CD4-positive, alpha-beta T cell (primary cell): ENCODE measurements at regions of chrX and their contacts with region 1.

Region 1: GRCh38 chrX:79270401-79270800 is 96.7 kb downstream of the ITM2A start:
- DNase-seq: peak; percentile 55 to 88 (median 72)
- ATAC-seq: peak; percentile 95
- H3K4me3 ChIP-seq: no peak overlapping the region
- H3K4me3 Mint-ChIP-seq: peak overlapping the region; percentile 53
- H3K27ac ChIP-seq: peak overlapping the region; percentile 3 to 29
- H3K27ac Mint-ChIP-seq: peak overlapping the region; percentile 87
- H3K4me1 ChIP-seq: peaks cover 3% of the 10 kb centered on the region
- H3K4me1 Mint-ChIP-seq: peaks cover 59% of the 10 kb centered on the region
- H3K27me3 ChIP-seq: no peaks in the 10 kb centered on the region
- H3K27me3 Mint-ChIP-seq: no peaks in the 10 kb centered on the region
- CTCF ChIP-seq: peak; percentile 75

Region 2: GRCh38 chrX:78555401-78555980 is 714.9 kb before region 1 on chrX:
- CTCF ChIA-PET with region 1: interaction called, 3 read pairs
- POLR2A ChIA-PET with region 1: no interaction called
- intact Hi-C with region 1: loop called (anchors 1 to 2 kb)
- DNase-seq: peak in 3 of 14 experiments; percentile 41 to 48 (median 45)
- ATAC-seq: peak; percentile 26
- H3K4me3 ChIP-seq: no peak overlapping the region
- H3K4me3 Mint-ChIP-seq: no peak overlapping the region
- H3K27ac ChIP-seq: no peak overlapping the region
- H3K27ac Mint-ChIP-seq: no peak overlapping the region
- H3K4me1 ChIP-seq: no peaks in the 10 kb centered on the region
- H3K4me1 Mint-ChIP-seq: peaks cover 9% of the 10 kb centered on the region
- H3K27me3 ChIP-seq: no peaks in the 10 kb centered on the region
- H3K27me3 Mint-ChIP-seq: no peaks in the 10 kb centered on the region
- CTCF ChIP-seq: peak; percentile 47

Region 3: GRCh38 chrX:78957768-78958130 is 312.7 kb before region 1 on chrX:
- CTCF ChIA-PET with region 1: interaction called, 3 read pairs
- POLR2A ChIA-PET with region 1: no interaction called
- intact Hi-C with region 1: loop called in 1 of 2 experiments (anchors 10 kb)
- DNase-seq: no peak
- ATAC-seq: no peak
- H3K4me3 ChIP-seq: no peak overlapping the region
- H3K4me3 Mint-ChIP-seq: peak overlapping the region; percentile 45
- H3K27ac ChIP-seq: peak overlapping the region; percentile 13 to 28
- H3K27ac Mint-ChIP-seq: peak overlapping the region; percentile 63
- H3K4me1 ChIP-seq: peaks cover 28% of the 10 kb centered on the region
- H3K4me1 Mint-ChIP-seq: peaks cover 79% of the 10 kb centered on the region
- H3K27me3 ChIP-seq: no peaks in the 10 kb centered on the region
- H3K27me3 Mint-ChIP-seq: no peaks in the 10 kb centered on the region
- CTCF ChIP-seq: no peak

Region 4: DNA sequence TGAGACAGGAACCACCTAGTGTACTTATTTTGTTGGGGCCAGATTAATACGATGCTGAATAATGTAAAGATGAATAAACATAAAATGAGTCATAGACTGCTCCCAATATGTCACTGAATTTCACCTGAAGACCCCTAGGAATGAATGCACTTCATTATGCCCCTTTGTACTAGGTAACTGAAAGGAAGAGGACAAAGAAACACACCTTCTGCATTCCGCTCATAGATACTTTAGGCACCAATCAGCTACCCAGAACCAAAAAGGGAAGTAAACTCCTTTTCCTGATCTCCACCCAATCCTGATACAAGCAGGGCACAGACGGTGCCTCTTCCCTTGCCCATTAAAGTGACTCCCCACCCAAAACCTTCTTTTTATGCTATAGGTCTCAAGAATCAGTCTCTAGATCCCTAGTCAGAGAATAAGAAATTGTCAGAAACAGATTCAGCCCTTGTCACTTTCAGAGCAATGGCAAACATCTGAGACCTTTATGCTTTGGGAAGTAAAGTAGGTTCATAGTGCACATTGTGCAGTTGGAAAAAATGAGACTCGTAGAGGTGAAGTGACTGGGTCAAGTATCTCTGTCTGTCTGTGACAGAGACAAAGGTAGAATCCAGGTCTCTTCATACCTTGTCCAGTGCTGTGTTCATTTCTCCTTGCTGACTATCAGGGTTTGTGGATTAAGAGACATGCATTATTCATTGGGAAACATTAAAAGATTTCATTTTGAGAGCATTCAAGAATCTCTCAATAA is 123.6 kb before region 1 on chrX:
- CTCF ChIA-PET with region 1: interaction called, 5 read pairs
- POLR2A ChIA-PET with region 1: interaction called, 9 read pairs
- intact Hi-C with region 1: loop called in 1 of 2 experiments (anchors 5 kb)
- DNase-seq: peak in 4 of 14 experiments; percentile 32 to 80 (median 44)
- ATAC-seq: peak; percentile 22
- H3K4me3 ChIP-seq: peak overlapping the region; percentile 80
- H3K4me3 Mint-ChIP-seq: peak overlapping the region; percentile 95
- H3K27ac ChIP-seq: peak overlapping the region; percentile 73 to 77
- H3K27ac Mint-ChIP-seq: peak overlapping the region; percentile 95
- H3K4me1 ChIP-seq: peaks cover 20% of the 10 kb centered on the region
- H3K4me1 Mint-ChIP-seq: peaks cover 51% of the 10 kb centered on the region
- H3K27me3 ChIP-seq: no peaks in the 10 kb centered on the region
- H3K27me3 Mint-ChIP-seq: no peaks in the 10 kb centered on the region
- CTCF ChIP-seq: no peak

Region 5: DNA sequence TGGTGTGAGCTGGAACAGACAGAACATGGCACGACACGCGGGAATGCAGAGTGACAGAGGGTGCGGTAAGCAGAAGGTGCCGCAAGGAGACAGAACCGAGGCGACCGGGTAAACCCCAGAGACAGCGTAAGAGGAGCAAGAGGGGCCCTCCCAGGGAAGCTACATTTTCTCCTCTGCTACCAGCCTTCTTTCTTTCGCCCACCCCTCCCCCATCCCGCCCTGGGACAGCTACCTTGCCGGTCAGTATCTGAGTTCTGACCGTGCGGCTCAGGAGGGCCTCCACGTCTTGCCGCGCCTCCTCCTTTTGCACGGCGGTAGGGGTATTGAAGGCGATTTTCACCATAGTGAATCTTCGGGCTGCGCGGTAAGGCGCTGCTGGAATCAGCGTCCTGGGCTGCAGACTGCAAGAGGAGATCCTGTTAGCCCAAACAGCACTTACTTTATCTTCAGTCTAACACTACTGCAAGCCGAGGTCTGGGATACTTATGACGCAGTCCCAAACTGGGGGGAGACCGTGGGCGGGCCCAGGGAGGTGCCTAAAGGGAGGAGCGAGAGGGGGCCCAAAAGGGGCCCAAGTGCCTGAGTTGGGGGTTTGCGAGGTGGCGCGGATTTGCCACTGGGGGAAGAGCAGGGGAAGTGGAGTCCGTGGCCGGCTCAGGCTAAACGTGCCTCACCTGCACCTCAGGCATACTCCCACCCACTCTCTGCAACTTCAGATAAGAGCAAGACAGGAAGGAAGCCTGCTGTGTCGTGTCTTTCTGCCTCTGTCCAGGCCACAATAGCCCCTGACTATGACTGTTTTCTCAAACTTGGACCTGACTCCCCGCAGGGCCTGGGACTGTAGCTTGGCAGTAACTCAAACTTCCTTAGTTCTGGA is 96.7 kb after region 1 on chrX and contains the start of gene ITM2A:
- CTCF ChIA-PET with region 1: interaction called, 4 read pairs
- POLR2A ChIA-PET with region 1: interaction called, 13 read pairs
- intact Hi-C with region 1: loop called in 1 of 2 experiments (anchors 10 kb)
- DNase-seq: peak; percentile 36 to 85 (median 55)
- ATAC-seq: peak; percentile 86
- H3K4me3 ChIP-seq: peak within 1 kb of the TSS; percentile 86
- H3K4me3 Mint-ChIP-seq: peak within 1 kb of the TSS; percentile 98
- H3K27ac ChIP-seq: peak within 1 kb of the TSS; percentile 77 to 88
- H3K27ac Mint-ChIP-seq: peak within 1 kb of the TSS; percentile 99
- H3K4me1 ChIP-seq: peaks cover 13% of the 10 kb centered on the region
- H3K4me1 Mint-ChIP-seq: peaks cover 27% of the 10 kb centered on the region
- H3K27me3 ChIP-seq: no peaks in the 10 kb centered on the region
- H3K27me3 Mint-ChIP-seq: no peaks in the 10 kb centered on the region
- CTCF ChIP-seq: no peak
- total RNA-seq, gene ITM2A: 236 to 259 TPM